Right ventricle myocardium inferior (tissue), 1 donor: ENCODE measurements at regions of chr4 and their contacts with region 1.

Region 1: DNA sequence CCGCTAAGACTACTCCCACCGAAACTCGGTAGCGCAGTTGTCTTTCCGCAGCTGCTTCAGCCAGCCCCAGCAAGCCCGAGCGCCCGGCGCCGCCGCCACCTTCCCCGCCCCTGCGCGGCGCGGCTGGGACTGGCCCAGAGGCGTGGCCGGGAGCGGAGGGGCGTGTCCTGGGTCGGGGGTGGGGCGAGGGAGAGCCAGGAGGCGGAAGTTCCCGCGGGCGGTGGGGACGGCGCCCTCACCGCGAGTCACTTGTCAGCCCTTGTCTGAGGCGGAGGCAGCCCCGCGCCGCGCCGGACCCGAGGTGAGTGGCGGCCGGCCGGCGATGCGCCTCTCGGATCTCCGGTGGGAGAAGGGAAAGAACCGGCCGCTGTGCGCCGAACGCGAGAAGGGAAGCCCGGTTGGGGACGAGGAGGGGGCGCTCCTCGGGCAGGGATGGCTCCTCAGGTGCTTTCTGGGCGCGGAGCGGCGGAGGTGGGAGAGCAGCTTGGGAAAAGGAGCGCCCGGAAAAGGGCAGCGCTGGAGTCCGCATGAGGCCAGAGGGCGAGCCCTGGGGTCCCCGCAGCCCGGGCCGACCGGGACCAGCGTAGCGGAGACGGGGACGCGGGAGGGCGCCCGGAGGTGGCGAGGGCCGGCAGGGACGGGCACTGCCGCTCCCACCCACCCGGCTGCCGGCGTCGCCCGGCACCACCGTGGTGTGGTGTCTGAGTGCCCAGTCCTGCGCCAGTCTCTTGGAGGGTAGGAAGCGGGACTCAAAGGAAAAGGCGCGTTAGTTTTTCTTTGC is at the start of gene PDLIM5:
- DNase-seq: peak; percentile 95
- ATAC-seq: peak; percentile 97
- total RNA-seq, gene PDLIM5: 1,145 TPM

Region 2: GRCh38 chr4:93828332-93828994 is 623.4 kb before region 1 on chr4 and contains the start of gene ATOH1:
- intact Hi-C with region 1: no loop called
- DNase-seq: peak; percentile 66
- ATAC-seq: peak; percentile 54
- total RNA-seq, gene ATOH1: not detected

Region 3: DNA sequence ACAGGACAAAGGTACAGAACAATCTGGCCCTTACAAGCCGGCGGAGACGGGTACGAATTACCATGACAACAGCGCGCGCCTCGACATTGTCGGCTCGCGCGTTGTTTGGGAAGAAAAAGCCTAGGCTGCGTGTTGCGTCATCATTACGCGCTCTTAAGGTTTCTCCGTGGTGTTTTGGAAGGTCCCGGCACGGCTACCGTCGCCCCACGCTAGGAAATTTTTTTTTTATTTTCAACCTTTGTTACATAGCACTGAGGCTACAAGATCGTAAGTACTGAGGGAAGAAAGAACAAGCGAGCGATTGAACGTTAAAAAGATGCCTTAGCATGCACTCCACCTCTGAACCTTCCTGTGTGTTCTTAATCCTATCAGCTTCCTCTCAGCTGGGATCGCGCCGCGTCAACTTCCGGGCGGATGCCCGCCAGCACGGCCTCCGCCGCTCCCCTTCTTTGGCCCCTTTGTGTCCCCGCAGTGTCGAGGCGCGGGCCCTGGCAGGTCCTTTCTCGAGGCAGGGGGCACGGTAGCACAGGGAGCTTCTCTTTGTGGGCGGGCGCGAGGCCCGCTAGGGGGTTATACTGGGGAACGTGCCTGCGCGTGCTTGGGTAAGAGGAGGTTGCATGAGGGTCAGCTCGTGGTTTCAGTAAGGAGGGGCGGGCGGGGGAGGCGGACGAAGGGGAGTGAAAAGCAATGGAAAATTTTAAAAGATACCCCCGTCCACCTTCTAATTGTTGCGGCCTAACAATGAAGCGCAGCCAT is 244.2 kb before region 1 on chr4 and contains the start of gene SMARCAD1:
- intact Hi-C with region 1: loop called (anchors 10 kb)
- DNase-seq: peak; percentile 94
- ATAC-seq: peak; percentile 96
- total RNA-seq, gene SMARCAD1: 9.2 TPM

Region 4: DNA sequence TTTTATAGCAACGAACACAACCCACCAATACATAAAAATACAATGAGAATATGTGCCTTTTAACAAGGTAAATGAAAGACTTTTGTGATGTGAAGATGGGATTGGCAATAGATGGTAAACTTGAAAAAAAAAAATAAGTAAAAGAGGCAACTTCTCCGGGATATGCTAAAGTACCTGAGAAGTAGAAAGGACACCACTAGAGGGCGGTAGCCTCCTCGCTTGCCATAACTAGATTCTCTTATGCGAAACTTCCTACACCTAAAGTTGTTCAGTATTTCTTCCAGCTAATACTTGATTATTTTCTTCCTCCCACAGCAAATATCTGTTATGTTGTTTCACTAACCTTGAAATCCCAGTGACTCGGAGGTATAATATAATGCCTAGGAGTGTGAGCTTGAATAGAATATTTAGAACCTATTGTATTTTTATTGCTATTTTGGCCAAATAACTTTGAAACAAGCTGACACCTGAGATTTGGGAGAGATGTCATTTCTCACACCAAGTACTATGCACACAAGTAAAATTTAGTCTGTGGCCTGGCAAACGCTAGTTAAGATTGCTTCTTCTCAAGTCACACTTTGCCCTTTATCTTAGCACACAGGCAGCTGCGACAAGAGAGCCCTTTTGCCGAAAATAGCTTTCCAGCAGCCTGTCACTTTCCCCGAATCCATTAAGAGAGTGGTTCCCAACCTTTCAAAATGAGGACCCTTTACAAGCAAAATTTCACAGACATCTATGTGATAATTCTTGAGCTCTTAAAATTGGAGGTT is 45.0 kb before region 1 on chr4:
- intact Hi-C with region 1: loop called (anchors 2 kb)
- DNase-seq: no peak
- ATAC-seq: peak; percentile 55

Region 5: DNA sequence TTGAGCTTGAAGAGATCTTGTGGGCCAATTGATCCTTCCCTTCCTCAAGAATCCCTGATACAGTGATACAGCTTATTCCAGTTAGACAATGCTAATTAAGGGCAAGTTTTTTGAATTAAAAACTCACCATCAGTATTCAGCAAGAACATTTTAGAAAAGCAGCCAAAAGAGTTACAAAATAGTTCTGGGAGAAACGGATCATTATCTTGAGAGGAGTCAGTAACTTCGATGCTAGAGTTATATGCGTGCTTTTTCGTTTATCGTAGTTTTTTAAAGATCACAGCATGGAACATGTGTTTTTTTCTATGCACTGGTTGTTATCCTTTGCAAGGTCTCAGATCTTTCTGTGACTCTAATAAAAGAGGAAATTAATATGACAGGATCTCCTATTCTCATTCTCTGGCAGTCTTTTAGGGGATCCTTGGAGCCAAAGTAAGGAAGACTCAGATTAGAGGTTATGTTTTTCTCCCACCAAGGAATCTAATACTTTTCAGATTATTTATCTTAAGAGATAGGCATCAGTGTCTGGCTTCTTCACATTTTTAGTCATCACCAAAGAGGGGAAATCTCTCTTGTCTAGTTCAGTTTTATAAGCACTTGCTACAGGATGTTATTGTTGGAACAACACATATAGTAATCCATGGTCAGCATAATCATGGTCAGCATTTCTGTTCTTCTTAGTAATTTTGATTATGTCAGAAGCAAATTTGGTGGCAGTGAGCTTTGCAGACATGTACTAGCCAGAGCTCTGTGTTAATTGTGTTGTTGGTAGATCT is 109.6 kb after region 1 on chr4:
- intact Hi-C with region 1: loop called (anchors 5 kb)
- DNase-seq: no peak
- ATAC-seq: peak; percentile 49

Region 6: GRCh38 chr4:94595879-94596483 is 144.1 kb after region 1 on chr4:
- intact Hi-C with region 1: loop called (anchors 2 kb)
- DNase-seq: no peak
- ATAC-seq: no peak